Dorsolateral prefrontal cortex (tissue), 120 donors: ENCODE measurements at regions of chr6 and their contacts with region 1.

Region 1: GRCh38 chr6:28940858-28941680 is 17.3 kb upstream of the TRIM27 start:
- DNase-seq: peak in 8 of 10 donors; percentile 57 to 79 (median 70)
- H3K4me3 ChIP-seq: peak overlapping the region; percentile 41 to 89 (median 72)
- H3K27ac ChIP-seq: peak overlapping the region; percentile 12 to 94 (median 80)
- H3K27me3 ChIP-seq: no peaks in the 10 kb centered on the region
- CTCF ChIP-seq: peak in 7 of 56 donors; percentile 4 to 33 (median 10)

Region 2: GRCh38 chr6:28838634-28839442 is 102.2 kb before region 1 on chr6:
- intact Hi-C with region 1: loop called (anchors 2 to 5 kb)
- DNase-seq: peak; percentile 66 to 92 (median 80)
- H3K4me3 ChIP-seq: peak overlapping the region; percentile 44 to 90 (median 77)
- H3K27ac ChIP-seq: peak overlapping the region in 56 of 59 donors; percentile 2 to 90 (median 70)
- H3K27me3 ChIP-seq: peaks cover 0 to 47% (median 7%) of the 10 kb centered on the region in 45 donors
- CTCF ChIP-seq: peak in 55 of 56 donors; percentile 37 to 80 (median 62)

Region 3: GRCh38 chr6:28856620-28857005 is 84.5 kb before region 1 on chr6:
- intact Hi-C with region 1: no loop called
- DNase-seq: no peak
- H3K4me3 ChIP-seq: no peak overlapping the region
- H3K27ac ChIP-seq: no peak overlapping the region
- H3K27me3 ChIP-seq: no peaks in the 10 kb centered on the region
- CTCF ChIP-seq: no peak

Region 4: GRCh38 chr6:28880894-28881780 is 59.9 kb before region 1 on chr6:
- intact Hi-C with region 1: loop called in 1 of 2 experiments (anchors 5 kb)
- DNase-seq: peak; percentile 51 to 83 (median 68)
- H3K4me3 ChIP-seq: peak overlapping the region; percentile 33 to 79 (median 64)
- H3K27ac ChIP-seq: peak overlapping the region in 13 of 59 donors; percentile 0 to 55 (median 17)
- H3K27me3 ChIP-seq: peaks cover 0 to 45% (median 2%) of the 10 kb centered on the region in 45 donors
- CTCF ChIP-seq: peak in 4 of 56 donors; percentile 13 to 23 (median 18)

Region 5: DNA sequence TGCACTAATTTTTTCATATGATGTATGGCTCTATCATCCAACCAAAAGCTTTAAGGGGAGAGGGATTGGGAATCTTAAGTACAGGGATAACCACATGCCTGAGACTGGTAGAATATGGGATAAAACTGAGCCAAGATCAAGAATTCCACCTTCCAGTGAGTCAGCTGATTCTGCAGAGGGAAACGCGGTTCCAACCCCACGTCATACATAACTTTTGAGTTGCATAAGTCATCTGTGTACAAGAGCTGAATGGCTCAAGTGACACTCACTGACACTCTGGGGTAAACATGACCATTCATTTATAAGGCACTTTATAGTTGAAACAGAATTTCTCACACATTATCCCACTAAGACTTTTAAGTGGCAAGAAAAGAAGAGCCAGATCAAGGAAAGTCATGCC is 33.7 kb before region 1 on chr6:
- intact Hi-C with region 1: no loop called
- DNase-seq: no peak
- H3K4me3 ChIP-seq: no peak overlapping the region
- H3K27ac ChIP-seq: no peak overlapping the region
- H3K27me3 ChIP-seq: no peaks in the 10 kb centered on the region
- CTCF ChIP-seq: no peak

Region 6: GRCh38 chr6:28923318-28924102 is 17.6 kb before region 1 on chr6 and contains the start of gene TRIM27:
- intact Hi-C with region 1: loop called in 1 of 2 experiments (anchors 1 kb)
- DNase-seq: peak in 9 of 10 donors; percentile 67 to 94 (median 88)
- H3K4me3 ChIP-seq: peak within 1 kb of the TSS; percentile 72 to 100 (median 95)
- H3K27ac ChIP-seq: peak within 1 kb of the TSS; percentile 57 to 99 (median 94)
- H3K27me3 ChIP-seq: no peaks in the 10 kb centered on the region
- CTCF ChIP-seq: peak in 35 of 56 donors; percentile 4 to 53 (median 26)
- total RNA-seq, gene TRIM27: 31.7 to 61.4 (median 42.6) TPM

Region 7: GRCh38 chr6:29082457-29082856 is 141.4 kb after region 1 on chr6:
- intact Hi-C with region 1: no loop called
- DNase-seq: no peak
- H3K4me3 ChIP-seq: no peak overlapping the region
- H3K27ac ChIP-seq: no peak overlapping the region
- H3K27me3 ChIP-seq: peaks cover 0 to 14% (median 0%) of the 10 kb centered on the region in 45 donors
- CTCF ChIP-seq: no peak

Region 8: GRCh38 chr6:29129326-29130012 is 188.4 kb after region 1 on chr6:
- intact Hi-C with region 1: no loop called
- DNase-seq: no peak
- H3K4me3 ChIP-seq: no peak overlapping the region
- H3K27ac ChIP-seq: no peak overlapping the region
- H3K27me3 ChIP-seq: peaks cover 0 to 32% (median 0%) of the 10 kb centered on the region in 45 donors
- CTCF ChIP-seq: no peak

Region 9: GRCh38 chr6:29632789-29633533 is 691.9 kb after region 1 on chr6 and contains the start of gene GABBR1:
- intact Hi-C with region 1: loop called in 1 of 2 experiments (anchors 5 kb)
- DNase-seq: peak; percentile 58 to 93 (median 86)
- H3K4me3 ChIP-seq: peak within 1 kb of the TSS; percentile 50 to 84 (median 71)
- H3K27ac ChIP-seq: peak within 1 kb of the TSS; percentile 13 to 95 (median 83)
- H3K27me3 ChIP-seq: peaks cover 0 to 4% (median 0%) of the 10 kb centered on the region in 45 donors
- CTCF ChIP-seq: peak in 2 of 56 donors; percentile 12 to 13
- total RNA-seq, gene GABBR1: 180 to 458 (median 348) TPM